Activated CD4-positive, alpha-beta T cell treated with anti-CD3 and anti-CD28 coated beads for 36 hours (primary cell): ENCODE measurements at regions of chr10 and their contacts with region 1.

Region 1: GRCh38 chr10:42638055-42638820 is at the start of gene ZNF33B:
- DNase-seq: peak; percentile 97
- ATAC-seq: peak; percentile 95
- H3K4me3 Mint-ChIP-seq: peak within 1 kb of the TSS; percentile 88
- H3K27ac Mint-ChIP-seq: peak within 1 kb of the TSS; percentile 97
- H3K4me1 Mint-ChIP-seq: peaks cover 25% of the 10 kb centered on the region
- H3K27me3 Mint-ChIP-seq: no peaks in the 10 kb centered on the region
- total RNA-seq, gene ZNF33B: 7.4 to 10.5 TPM

Region 2: GRCh38 chr10:42652860-42653259 is 14.6 kb after region 1 on chr10:
- CTCF ChIA-PET with region 1: no interaction called
- POLR2A ChIA-PET with region 1: no interaction called
- intact Hi-C with region 1: no loop called
- DNase-seq: no peak
- ATAC-seq: no peak
- H3K4me3 Mint-ChIP-seq: no peak overlapping the region
- H3K27ac Mint-ChIP-seq: no peak overlapping the region
- H3K4me1 Mint-ChIP-seq: peaks cover 6% of the 10 kb centered on the region
- H3K27me3 Mint-ChIP-seq: peaks cover 2% of the 10 kb centered on the region

Region 3: GRCh38 chr10:42801135-42801534 is 162.9 kb after region 1 on chr10:
- CTCF ChIA-PET with region 1: no interaction called
- POLR2A ChIA-PET with region 1: no interaction called
- intact Hi-C with region 1: loop called (anchors 5 kb)
- DNase-seq: peak; percentile 24
- ATAC-seq: peak; percentile 94
- H3K4me3 Mint-ChIP-seq: no peak overlapping the region
- H3K27ac Mint-ChIP-seq: peak overlapping the region; percentile 89
- H3K4me1 Mint-ChIP-seq: peaks cover 31% of the 10 kb centered on the region
- H3K27me3 Mint-ChIP-seq: no peaks in the 10 kb centered on the region

Region 4: DNA sequence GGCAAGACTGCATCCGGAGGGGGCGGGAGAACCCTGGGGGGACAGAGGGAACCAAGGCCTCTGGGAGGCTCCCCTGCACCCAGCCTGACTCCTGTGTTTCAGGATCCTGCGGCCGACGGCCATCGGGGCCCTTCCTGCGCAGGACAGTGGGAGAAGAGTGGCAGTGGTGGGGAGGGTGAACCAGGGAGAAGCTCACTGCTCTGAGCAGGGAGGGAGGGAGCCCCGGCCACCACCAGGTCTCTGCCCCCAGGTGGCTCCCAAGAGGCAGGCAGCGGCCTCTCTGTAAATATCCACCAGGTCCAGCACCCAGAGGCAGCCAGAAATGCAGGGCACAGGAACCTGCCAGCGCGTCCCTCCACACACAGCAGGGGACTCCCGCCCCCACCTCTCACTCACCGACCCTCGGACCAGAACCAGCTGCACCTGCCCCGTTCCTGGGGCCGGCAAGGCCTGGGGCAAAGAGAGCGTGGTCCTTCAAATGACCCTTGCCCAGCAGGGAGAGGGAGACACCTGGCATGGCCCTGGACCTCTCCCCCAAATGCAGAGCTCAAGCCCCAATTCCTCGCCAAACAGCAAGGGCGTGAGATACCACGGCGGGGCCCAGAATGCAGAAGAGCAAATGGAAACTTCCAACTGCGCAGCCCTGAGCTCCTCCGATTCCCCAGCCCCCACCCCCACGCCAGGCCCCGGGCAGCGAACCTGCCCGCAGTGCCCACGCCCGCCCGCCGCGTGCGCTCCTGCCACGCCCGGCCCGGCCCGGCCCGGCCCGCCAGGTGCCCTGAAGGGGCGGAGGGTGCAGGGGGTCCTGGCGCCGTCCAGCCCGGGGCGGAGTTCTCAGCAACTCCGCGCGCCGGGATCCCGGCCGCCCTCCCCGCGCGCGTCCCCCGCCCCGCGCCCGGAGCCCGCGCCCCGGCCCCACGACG is 627.8 kb after region 1 on chr10:
- CTCF ChIA-PET with region 1: no interaction called
- POLR2A ChIA-PET with region 1: no interaction called
- intact Hi-C with region 1: no loop called
- DNase-seq: peak; percentile 62
- ATAC-seq: peak; percentile 76
- H3K4me3 Mint-ChIP-seq: peak overlapping the region; percentile 62
- H3K27ac Mint-ChIP-seq: no peak overlapping the region
- H3K4me1 Mint-ChIP-seq: peaks cover 3% of the 10 kb centered on the region
- H3K27me3 Mint-ChIP-seq: peaks cover 46% of the 10 kb centered on the region